ENCODE measurements at regions of chr19 and their contacts with region 1.

Region 1: GRCh38 chr19:19900729-19901444 is at the start of gene ZNF93:
- DNase-seq: peak; percentile 95
- ATAC-seq: peak; percentile 95
- H3K4me3 Mint-ChIP-seq: peak within 1 kb of the TSS; percentile 99
- H3K27ac Mint-ChIP-seq: peak within 1 kb of the TSS; percentile 97
- H3K4me1 Mint-ChIP-seq: peaks cover 39% of the 10 kb centered on the region
- H3K27me3 Mint-ChIP-seq: no peaks in the 10 kb centered on the region
- total RNA-seq, gene ZNF93: 21.7 to 22.3 TPM

Region 2: GRCh38 chr19:19591133-19591825 is 309.6 kb before region 1 on chr19:
- CTCF ChIA-PET with region 1: no interaction called
- POLR2A ChIA-PET with region 1: no interaction called
- intact Hi-C with region 1: loop called in 1 of 2 experiments (anchors 1 kb)
- DNase-seq: peak; percentile 85
- ATAC-seq: peak; percentile 91
- H3K4me3 Mint-ChIP-seq: peak overlapping the region; percentile 27
- H3K27ac Mint-ChIP-seq: peak overlapping the region; percentile 82
- H3K4me1 Mint-ChIP-seq: peaks cover 66% of the 10 kb centered on the region
- H3K27me3 Mint-ChIP-seq: no peaks in the 10 kb centered on the region

Region 3: GRCh38 chr19:19776041-19777008 is 124.6 kb before region 1 on chr19:
- CTCF ChIA-PET with region 1: interaction called, 3 read pairs
- POLR2A ChIA-PET with region 1: interaction called, 3 read pairs
- intact Hi-C with region 1: loop called (anchors 1 kb)
- DNase-seq: peak; percentile 96
- ATAC-seq: peak; percentile 99
- H3K4me3 Mint-ChIP-seq: peak overlapping the region; percentile 98
- H3K27ac Mint-ChIP-seq: peak overlapping the region; percentile 85
- H3K4me1 Mint-ChIP-seq: peaks cover 37% of the 10 kb centered on the region
- H3K27me3 Mint-ChIP-seq: no peaks in the 10 kb centered on the region

Region 4: GRCh38 chr19:19860756-19861390 is 40.0 kb before region 1 on chr19:
- CTCF ChIA-PET with region 1: no interaction called
- POLR2A ChIA-PET with region 1: interaction called, 21 read pairs
- intact Hi-C with region 1: loop called (anchors 1 kb)
- DNase-seq: peak; percentile 86
- ATAC-seq: peak; percentile 72
- H3K4me3 Mint-ChIP-seq: peak overlapping the region; percentile 83
- H3K27ac Mint-ChIP-seq: peak overlapping the region; percentile 82
- H3K4me1 Mint-ChIP-seq: peaks cover 7% of the 10 kb centered on the region
- H3K27me3 Mint-ChIP-seq: no peaks in the 10 kb centered on the region

Region 5: GRCh38 chr19:19865739-19866481 is 35.0 kb before region 1 on chr19 and contains the start of gene ZNF253:
- CTCF ChIA-PET with region 1: interaction called, 5 read pairs
- POLR2A ChIA-PET with region 1: interaction called, 21 read pairs
- intact Hi-C with region 1: loop called (anchors 1 kb)
- DNase-seq: peak; percentile 98
- ATAC-seq: peak; percentile 93
- H3K4me3 Mint-ChIP-seq: peak within 1 kb of the TSS; percentile 88
- H3K27ac Mint-ChIP-seq: peak within 1 kb of the TSS; percentile 98
- H3K4me1 Mint-ChIP-seq: peaks cover 21% of the 10 kb centered on the region
- H3K27me3 Mint-ChIP-seq: no peaks in the 10 kb centered on the region
- total RNA-seq, gene ZNF253: 16.1 to 25.1 TPM

Region 6: GRCh38 chr19:19873381-19873780 is 27.5 kb before region 1 on chr19:
- CTCF ChIA-PET with region 1: interaction called, 5 read pairs
- POLR2A ChIA-PET with region 1: interaction called, 5 read pairs
- intact Hi-C with region 1: loop called in 1 of 2 experiments (anchors 1 kb)
- DNase-seq: no peak
- ATAC-seq: peak; percentile 58
- H3K4me3 Mint-ChIP-seq: no peak overlapping the region
- H3K27ac Mint-ChIP-seq: no peak overlapping the region
- H3K4me1 Mint-ChIP-seq: peaks cover 41% of the 10 kb centered on the region
- H3K27me3 Mint-ChIP-seq: no peaks in the 10 kb centered on the region

Region 7: DNA sequence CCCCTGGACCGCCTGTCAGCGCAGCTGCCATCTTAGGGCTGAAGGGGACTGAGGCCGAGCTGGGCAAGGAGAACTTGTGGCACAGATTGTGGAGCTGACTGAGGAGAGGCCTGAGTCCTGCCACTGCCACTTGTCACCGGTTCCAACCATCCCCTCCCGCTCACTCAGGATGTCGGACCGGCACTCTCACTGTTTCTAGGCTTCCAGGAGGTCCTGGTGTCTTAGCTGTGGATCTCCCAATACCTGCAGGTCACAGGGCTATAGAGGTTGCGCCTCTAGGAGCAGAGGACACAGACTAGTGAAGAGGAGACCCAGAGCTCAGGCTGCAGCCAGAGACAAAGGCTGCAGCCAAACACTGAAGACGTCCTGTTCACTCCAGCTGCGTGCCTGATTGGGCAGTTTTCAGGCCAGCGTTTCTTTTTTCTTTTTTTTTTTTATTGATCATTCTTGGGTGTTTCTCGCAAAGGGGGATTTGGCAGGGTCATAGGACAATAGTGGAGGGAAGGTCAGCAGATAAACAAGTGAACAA is 250.8 kb after region 1 on chr19:
- CTCF ChIA-PET with region 1: no interaction called
- POLR2A ChIA-PET with region 1: no interaction called
- intact Hi-C with region 1: no loop called
- DNase-seq: no peak
- ATAC-seq: no peak
- H3K4me3 Mint-ChIP-seq: no peak overlapping the region
- H3K27ac Mint-ChIP-seq: no peak overlapping the region
- H3K4me1 Mint-ChIP-seq: no peaks in the 10 kb centered on the region
- H3K27me3 Mint-ChIP-seq: no peaks in the 10 kb centered on the region

Region 8: GRCh38 chr19:20167020-20167644 is 266.2 kb after region 1 on chr19 and contains the start of gene ZNF486:
- CTCF ChIA-PET with region 1: no interaction called
- POLR2A ChIA-PET with region 1: interaction called, 4 read pairs
- intact Hi-C with region 1: loop called in 1 of 2 experiments (anchors 2 kb)
- DNase-seq: peak; percentile 97
- ATAC-seq: peak; percentile 99
- H3K4me3 Mint-ChIP-seq: peak within 1 kb of the TSS; percentile 99
- H3K27ac Mint-ChIP-seq: peak within 1 kb of the TSS; percentile 97
- H3K4me1 Mint-ChIP-seq: peaks cover 34% of the 10 kb centered on the region
- H3K27me3 Mint-ChIP-seq: no peaks in the 10 kb centered on the region
- total RNA-seq, gene ZNF486: 16.1 to 18.1 TPM

Region 9: DNA sequence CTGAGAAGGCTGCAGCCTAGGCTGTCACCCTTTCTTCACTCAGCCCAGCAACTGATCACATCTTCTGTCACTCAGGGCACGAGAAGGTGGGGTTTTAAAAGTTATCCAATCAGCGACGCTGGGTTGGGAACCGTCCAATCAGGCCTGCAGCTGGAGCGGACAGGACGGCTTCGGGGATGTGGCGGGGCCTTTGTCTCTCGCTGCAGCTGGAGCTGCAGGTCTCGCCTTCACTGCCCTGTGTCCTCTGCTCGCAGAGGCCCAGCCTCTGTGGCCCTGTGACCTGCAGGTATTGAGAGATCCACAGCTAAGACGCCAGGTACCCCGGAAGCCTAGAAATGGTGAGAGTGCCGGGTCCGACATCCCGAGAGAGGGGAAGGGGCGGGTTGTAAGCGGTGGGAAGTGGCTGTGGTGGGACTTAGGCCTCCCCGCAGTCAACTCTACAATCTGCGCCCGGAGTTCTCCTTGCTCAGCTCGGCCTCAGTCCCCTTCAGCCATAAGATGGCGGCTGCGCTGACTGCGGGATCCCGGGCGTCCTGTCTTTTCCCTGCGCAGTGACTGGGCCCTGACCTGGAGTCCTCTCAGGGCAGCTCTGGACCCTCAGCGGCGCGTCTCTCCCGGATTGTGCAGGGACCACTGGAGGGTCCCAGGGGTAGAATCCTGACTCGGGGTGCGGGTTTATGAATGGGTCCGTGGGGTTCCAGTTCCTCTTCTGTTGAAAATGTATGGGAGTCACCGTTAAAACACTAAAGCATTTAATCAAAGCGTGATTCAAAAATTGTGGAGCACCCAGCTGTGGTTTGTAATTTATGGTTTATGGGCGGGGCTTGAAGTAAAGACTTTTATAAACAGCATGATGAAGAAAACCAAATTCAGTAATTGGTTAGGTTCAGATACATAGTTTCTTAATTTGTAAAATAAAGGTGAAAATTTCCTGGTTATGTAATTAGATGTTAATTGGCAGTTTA is 1181.4 kb after region 1 on chr19 and contains the start of gene ZNF714:
- CTCF ChIA-PET with region 1: no interaction called
- POLR2A ChIA-PET with region 1: no interaction called
- intact Hi-C with region 1: no loop called
- DNase-seq: peak; percentile 89
- ATAC-seq: peak; percentile 98
- H3K4me3 Mint-ChIP-seq: peak within 1 kb of the TSS; percentile 99
- H3K27ac Mint-ChIP-seq: peak within 1 kb of the TSS; percentile 97
- H3K4me1 Mint-ChIP-seq: peaks cover 24% of the 10 kb centered on the region
- H3K27me3 Mint-ChIP-seq: no peaks in the 10 kb centered on the region
- total RNA-seq, gene ZNF714: 17.4 to 20.0 TPM